Activated T-helper 2 cell treated with anti-CD3 and anti-CD28 coated beads, Interferon-gamma antibody, Interleukin-2, Interleukin-4, amounts not matched to agents 10 μg/mL and 5 μg/mL and 100 μg/mL, durations not matched to agents 14 hours and 24 hours and 36 hours (primary cell): ENCODE measurements at regions of chr14 and their contacts with region 1.

Region 1: GRCh38 chr14:73713803-73714655 is at the start of gene PNMA1:
- DNase-seq: peak; percentile 85
- H3K4me3 Mint-ChIP-seq: peak within 1 kb of the TSS; percentile 86
- H3K27ac Mint-ChIP-seq: peak within 1 kb of the TSS; percentile 92
- H3K4me1 Mint-ChIP-seq: peaks cover 16% of the 10 kb centered on the region
- H3K27me3 Mint-ChIP-seq: no peaks in the 10 kb centered on the region
- total RNA-seq, gene PNMA1: 30.1 and 32.1 TPM in 2 replicates

Region 2: DNA sequence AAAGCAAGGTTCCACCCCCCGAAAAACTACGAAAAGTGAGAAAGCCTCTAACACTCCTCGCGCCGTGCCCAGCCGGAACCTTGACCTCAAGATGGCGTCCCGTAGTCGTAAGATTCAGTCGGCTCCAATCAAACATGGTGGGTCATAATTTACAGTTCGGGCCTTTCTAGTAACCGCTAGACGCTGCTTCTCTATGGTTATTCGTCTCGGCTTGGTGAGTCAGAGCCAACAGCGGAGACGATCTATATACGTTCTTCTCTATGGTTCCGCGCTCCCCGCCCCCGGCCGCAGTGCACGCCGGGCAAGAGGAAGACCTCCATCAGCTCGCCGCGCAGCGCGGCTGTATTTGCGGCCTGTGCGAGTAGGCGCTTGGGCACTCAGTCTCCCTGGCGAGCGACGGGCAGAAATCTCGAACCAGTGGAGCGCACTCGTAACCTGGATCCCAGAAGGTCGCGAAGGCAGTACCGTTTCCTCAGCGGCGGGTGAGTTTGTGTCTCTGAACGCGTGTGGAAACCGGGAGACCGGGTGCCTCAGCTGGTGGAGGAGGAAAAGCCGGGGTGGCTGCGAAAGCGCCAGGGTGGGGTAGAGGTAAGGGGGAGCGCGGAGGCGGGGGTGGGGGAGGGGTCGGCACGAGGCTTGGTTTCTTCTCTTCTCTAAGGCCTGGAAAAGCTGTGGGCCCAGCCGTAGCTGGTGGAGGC is 655.7 kb before region 1 on chr14 and contains the start of gene RBM25:
- intact Hi-C with region 1: loop called (anchors 10 kb)
- DNase-seq: peak; percentile 93
- H3K4me3 Mint-ChIP-seq: no peak within 1 kb of the TSS
- H3K27ac Mint-ChIP-seq: no peak within 1 kb of the TSS
- H3K4me1 Mint-ChIP-seq: peaks cover 22% of the 10 kb centered on the region
- H3K27me3 Mint-ChIP-seq: no peaks in the 10 kb centered on the region
- total RNA-seq, gene RBM25: 114 and 121 TPM in 2 replicates

Region 3: DNA sequence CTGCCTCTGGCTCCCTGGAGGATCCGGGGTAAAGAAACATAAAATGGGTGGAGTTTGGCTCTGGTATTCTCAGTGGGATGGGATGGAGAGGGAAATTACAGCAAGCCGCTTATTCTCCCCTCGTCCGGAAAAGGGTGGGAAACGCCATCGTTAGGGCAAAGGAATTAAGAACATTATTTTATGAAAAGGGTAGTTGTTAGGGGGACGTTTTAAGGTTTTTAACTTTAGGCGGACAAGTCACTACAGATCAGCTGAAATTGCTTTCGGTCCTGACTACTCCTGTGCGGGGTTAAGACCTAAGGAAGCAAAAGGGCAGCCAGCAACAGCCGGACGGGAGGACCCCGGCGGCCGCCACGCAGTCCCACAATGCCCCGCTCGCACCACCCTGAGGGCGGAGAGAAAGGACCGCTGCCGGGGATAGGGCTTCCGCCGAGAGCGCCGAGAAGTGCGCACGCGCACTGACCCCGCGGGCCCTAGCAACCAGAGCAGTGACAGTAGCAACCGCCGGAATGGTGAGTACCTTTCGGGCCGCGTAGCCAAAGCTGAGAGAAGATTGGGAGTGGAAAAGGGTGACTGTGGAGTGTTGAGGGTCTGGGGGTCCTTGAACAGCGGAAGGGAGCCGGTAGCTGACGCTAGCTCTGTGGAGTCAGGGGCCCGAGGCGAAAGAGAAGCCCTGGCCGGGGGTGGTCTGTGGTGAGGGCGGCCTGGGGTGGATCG is 69.3 kb before region 1 on chr14 and contains the start of gene DNAL1:
- intact Hi-C with region 1: loop called (anchors 1 kb)
- DNase-seq: peak; percentile 90
- H3K4me3 Mint-ChIP-seq: peak within 1 kb of the TSS; percentile 90
- H3K27ac Mint-ChIP-seq: peak within 1 kb of the TSS; percentile 90
- H3K4me1 Mint-ChIP-seq: peaks cover 12% of the 10 kb centered on the region
- H3K27me3 Mint-ChIP-seq: no peaks in the 10 kb centered on the region
- total RNA-seq, gene DNAL1: 6.0 and 6.2 TPM in 2 replicates

Region 4: GRCh38 chr14:73741386-73741875 is 27.4 kb after region 1 on chr14:
- intact Hi-C with region 1: loop called (anchors 1 kb)
- DNase-seq: peak; percentile 75
- H3K4me3 Mint-ChIP-seq: peak overlapping the region; percentile 72
- H3K27ac Mint-ChIP-seq: peak overlapping the region; percentile 80
- H3K4me1 Mint-ChIP-seq: peaks cover 63% of the 10 kb centered on the region
- H3K27me3 Mint-ChIP-seq: no peaks in the 10 kb centered on the region

Region 5: GRCh38 chr14:73886449-73887317 is 172.7 kb after region 1 on chr14 and contains the start of gene ZNF410:
- intact Hi-C with region 1: loop called (anchors 1 kb)
- DNase-seq: peak; percentile 84
- H3K4me3 Mint-ChIP-seq: peak within 1 kb of the TSS; percentile 84
- H3K27ac Mint-ChIP-seq: peak within 1 kb of the TSS; percentile 98
- H3K4me1 Mint-ChIP-seq: peaks cover 39% of the 10 kb centered on the region
- H3K27me3 Mint-ChIP-seq: no peaks in the 10 kb centered on the region
- total RNA-seq, gene ZNF410: 77.5 and 82.9 TPM in 2 replicates

Region 6: DNA sequence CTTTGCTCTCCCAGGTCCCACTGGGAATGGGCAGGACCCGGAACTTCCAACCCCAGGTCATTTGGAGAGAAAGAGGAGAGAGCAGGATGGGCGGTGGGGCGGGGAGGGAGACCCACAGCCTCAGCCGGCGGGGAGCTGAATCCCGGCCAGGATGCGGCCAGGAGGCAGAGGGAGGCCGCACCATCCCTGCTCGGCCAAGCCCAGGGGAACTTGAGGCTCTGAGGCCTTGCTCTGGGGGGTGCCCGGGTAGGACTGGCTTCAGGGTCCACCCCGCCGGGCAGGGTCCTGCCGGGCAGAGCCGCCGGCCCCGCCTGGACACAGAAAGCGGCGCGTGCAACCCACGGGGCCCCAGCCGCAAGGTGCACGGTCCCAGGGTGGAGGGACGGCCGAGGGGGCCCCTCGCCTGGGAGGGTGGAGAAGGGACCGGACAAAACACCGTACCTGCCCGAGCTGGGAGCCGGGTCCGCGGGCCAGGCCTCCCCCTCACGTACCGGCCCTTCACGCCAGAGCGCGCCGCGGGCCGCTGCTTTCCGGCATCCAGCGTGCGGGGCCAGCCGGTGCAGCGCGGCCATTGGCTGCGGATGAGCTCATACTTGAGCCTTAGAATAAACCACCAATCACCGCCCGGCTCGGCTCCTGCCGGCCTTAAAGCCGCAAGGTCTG is 1208.8 kb after region 1 on chr14 and contains the start of gene RPS6KL1:
- intact Hi-C with region 1: no loop called
- DNase-seq: peak; percentile 71
- H3K4me3 Mint-ChIP-seq: peak within 1 kb of the TSS; percentile 81
- H3K27ac Mint-ChIP-seq: peak within 1 kb of the TSS; percentile 76
- H3K4me1 Mint-ChIP-seq: peaks cover 1% of the 10 kb centered on the region
- H3K27me3 Mint-ChIP-seq: peaks cover 21% of the 10 kb centered on the region
- total RNA-seq, gene RPS6KL1: 10.8 and 12.0 TPM in 2 replicates